Gastrocnemius medialis (tissue), 4 donors: ENCODE measurements at regions of chr3 and their contacts with region 1.

Region 1: GRCh38 chr3:172562871-172563863 is 39.9 kb upstream of the TNFSF10 start:
- DNase-seq: peak in 1 of 2 donors; percentile 20
- ATAC-seq: peak; percentile 83 to 84
- H3K4me3 ChIP-seq: peak overlapping the region in 3 of 4 donors; percentile 7 to 31 (median 14)
- H3K27ac ChIP-seq: peak overlapping the region; percentile 67 to 77 (median 74)
- H3K4me1 ChIP-seq: peaks cover 15 to 16% of the 10 kb centered on the region in 2 donors
- H3K27me3 ChIP-seq: no peaks in the 10 kb centered on the region
- CTCF ChIP-seq: no peak
- POLR2A ChIP-seq: peak in 1 of 2 donors; percentile 38

Region 2: DNA sequence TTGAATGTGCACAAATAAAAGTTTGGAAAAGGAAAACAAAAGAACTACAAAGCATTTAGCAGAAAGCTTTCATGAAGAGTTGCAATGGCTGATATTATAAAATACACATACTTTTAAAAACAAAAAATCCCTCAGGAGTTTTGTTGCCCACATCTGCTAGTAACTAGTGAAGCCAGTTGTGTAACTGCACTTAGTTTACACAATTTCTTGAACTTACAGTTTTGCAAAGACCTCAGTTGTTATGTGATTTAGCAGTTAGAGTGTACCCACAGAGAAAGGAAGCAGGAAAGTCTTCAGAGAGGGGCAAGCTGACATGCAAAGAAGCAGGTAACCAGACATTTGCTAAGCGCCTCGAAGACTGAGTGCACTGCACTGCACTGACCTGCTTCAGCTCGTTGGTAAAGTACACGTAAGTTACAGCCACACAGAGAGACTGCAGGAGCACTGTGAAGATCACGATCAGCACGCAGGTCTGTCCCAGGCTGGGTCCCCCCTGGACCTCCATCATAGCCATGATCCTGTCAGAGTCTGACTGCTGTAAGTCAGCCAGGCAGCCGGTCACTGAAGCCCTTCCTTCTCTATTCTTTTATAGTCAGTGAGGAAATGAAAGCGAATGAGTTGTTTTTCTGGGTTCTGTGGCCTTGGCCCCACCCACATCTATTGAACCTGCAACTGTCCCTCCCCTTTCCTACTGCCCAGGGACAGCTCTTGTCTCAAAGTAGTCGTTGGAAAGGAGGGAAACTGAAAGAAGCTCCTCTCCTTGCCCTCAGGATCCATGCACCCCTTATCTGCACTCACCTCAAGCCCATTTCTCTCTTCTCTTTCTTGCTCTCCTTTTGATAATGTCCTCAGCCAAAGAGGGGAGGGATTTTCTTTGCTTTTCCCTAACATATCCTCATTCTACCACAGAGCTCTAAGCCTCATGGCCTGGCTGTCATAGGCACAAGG is 40.0 kb before region 1 on chr3 and contains the start of gene TNFSF10:
- in situ Hi-C with region 1: no loop called
- intact Hi-C with region 1: loop called (anchors 5 kb)
- DNase-seq: peak; percentile 14 to 52
- ATAC-seq: peak; percentile 77 to 80
- H3K4me3 ChIP-seq: peak within 1 kb of the TSS; percentile 39 to 58 (median 56)
- H3K27ac ChIP-seq: peak within 1 kb of the TSS; percentile 58 to 73 (median 66)
- H3K4me1 ChIP-seq: peaks cover 0 to 2% of the 10 kb centered on the region in 2 donors
- H3K27me3 ChIP-seq: no peaks in the 10 kb centered on the region
- CTCF ChIP-seq: no peak
- POLR2A ChIP-seq: peak; percentile 36 to 64
- total RNA-seq, gene TNFSF10: 10.2 to 32.8 (median 24.3) TPM

Region 3: GRCh38 chr3:172749221-172749965 is 186.2 kb after region 1 on chr3:
- in situ Hi-C with region 1: no loop called
- intact Hi-C with region 1: no loop called
- DNase-seq: no peak
- ATAC-seq: no peak
- H3K4me3 ChIP-seq: peak overlapping the region; percentile 67 to 80 (median 72)
- H3K27ac ChIP-seq: peak overlapping the region; percentile 68 to 73 (median 69)
- H3K4me1 ChIP-seq: peaks cover 0 to 8% of the 10 kb centered on the region in 2 donors
- H3K27me3 ChIP-seq: no peaks in the 10 kb centered on the region
- CTCF ChIP-seq: no peak
- POLR2A ChIP-seq: no peak

Region 4: GRCh38 chr3:172904711-172905373 is 341.7 kb after region 1 on chr3:
- in situ Hi-C with region 1: no loop called
- intact Hi-C with region 1: no loop called
- DNase-seq: no peak
- ATAC-seq: no peak
- H3K4me3 ChIP-seq: no peak overlapping the region
- H3K27ac ChIP-seq: no peak overlapping the region
- H3K4me1 ChIP-seq: no peaks in the 10 kb centered on the region
- H3K27me3 ChIP-seq: no peaks in the 10 kb centered on the region
- CTCF ChIP-seq: no peak
- POLR2A ChIP-seq: no peak

Region 5: DNA sequence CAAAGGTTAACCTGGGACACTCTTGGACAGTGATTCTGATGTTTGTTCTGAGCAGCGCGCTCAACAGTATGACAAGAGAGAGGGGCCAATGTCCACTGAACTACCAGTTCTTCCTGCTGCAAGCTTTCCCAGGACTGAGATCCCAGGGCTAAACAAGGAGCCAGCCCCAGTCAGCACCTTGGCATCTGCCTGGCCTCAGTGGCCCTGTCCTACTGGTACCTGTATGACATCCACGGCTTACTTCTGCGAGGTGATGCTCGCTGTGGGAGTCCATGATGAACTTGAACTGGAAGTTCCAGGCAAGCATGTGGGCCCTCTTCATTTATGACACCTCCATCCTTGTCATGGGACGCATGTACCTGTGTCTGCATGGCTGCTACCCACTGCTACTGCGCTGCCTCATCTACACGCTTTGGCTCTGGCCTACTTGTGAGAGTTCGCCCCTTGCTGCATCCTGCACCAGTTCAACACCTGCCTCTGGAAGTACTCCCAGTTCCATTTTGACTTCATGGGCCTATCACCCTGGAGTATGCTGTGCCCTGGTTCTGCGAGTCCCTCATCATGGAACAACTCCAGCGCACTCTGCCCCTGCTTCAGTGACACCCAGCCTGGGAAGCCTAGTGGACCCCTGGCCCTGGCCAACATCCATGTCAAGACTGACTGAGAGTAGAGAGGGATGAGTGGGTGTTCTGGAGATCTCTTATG is 1081.0 kb after region 1 on chr3:
- in situ Hi-C with region 1: no loop called
- intact Hi-C with region 1: no loop called
- DNase-seq: no peak
- ATAC-seq: no peak
- H3K4me3 ChIP-seq: no peak overlapping the region
- H3K27ac ChIP-seq: no peak overlapping the region
- H3K4me1 ChIP-seq: no peaks in the 10 kb centered on the region
- H3K27me3 ChIP-seq: no peaks in the 10 kb centered on the region
- CTCF ChIP-seq: no peak
- POLR2A ChIP-seq: no peak